Naive thymus-derived CD4-positive, alpha-beta T cell (primary cell): ENCODE measurements at regions of chr1 and their contacts with region 1.

Region 1: DNA sequence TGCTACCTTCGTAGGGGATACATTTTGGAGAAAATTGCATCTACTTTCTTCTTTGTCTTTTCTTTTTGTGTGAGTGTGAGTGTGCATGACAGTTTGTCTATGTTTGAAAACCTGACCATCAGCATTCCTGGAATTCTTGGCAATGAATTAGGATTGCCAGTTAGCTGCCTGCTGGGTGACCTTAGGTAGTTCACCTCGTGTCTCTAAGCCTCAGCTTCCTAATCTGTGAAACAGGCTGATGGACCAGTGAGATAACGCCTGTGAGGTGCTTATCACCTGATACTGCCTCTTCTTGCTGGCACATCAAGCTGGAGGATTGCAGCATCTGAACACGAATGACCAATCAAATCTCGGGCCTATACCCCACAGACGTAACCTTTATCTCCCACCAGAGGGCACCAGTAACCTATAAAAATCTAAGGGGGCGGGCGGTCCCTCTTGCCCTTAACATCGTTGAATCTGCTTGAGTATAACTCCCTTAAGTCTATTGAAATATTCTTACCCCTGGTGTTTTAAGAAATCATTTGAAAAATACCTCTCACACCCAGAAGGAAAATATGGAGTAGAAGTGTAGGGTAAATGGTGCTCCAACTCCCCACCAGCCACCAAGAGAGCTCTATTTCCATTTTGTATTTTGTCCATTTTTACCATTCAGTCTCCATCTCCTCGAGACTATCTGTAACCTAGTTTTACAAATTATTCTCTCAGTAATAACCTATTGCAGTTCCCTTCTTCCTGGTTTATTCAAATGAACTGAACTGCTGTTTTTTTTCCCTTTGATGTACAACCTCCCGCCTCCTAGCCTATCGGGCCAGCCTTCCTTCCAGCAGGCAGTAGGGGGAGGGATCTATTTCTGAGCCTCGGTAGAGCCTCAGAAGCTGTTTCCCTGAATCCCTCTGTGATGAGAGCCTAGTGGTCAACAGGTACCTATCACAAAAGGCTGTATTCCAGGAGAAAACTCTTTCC is 49.7 kb downstream of the MDM4 start:
- DNase-seq: peak in 8 of 9 donors; percentile 47 to 80 (median 68)
- ATAC-seq: peak; percentile 92
- H3K4me3 ChIP-seq: no peak overlapping the region
- H3K4me3 Mint-ChIP-seq: peak overlapping the region in 5 of 10 donors; percentile 3 to 51 (median 15)
- H3K27ac ChIP-seq: no peak overlapping the region
- H3K27ac Mint-ChIP-seq: peak overlapping the region; percentile 58 to 84 (median 74)
- H3K4me1 ChIP-seq: peaks cover 14 to 37% of the 10 kb centered on the region in 2 donors
- H3K4me1 Mint-ChIP-seq: peaks cover 22 to 62% (median 55%) of the 10 kb centered on the region in 7 donors
- H3K27me3 ChIP-seq: no peaks in the 10 kb centered on the region
- H3K27me3 Mint-ChIP-seq: no peaks in the 10 kb centered on the region

Region 2: DNA sequence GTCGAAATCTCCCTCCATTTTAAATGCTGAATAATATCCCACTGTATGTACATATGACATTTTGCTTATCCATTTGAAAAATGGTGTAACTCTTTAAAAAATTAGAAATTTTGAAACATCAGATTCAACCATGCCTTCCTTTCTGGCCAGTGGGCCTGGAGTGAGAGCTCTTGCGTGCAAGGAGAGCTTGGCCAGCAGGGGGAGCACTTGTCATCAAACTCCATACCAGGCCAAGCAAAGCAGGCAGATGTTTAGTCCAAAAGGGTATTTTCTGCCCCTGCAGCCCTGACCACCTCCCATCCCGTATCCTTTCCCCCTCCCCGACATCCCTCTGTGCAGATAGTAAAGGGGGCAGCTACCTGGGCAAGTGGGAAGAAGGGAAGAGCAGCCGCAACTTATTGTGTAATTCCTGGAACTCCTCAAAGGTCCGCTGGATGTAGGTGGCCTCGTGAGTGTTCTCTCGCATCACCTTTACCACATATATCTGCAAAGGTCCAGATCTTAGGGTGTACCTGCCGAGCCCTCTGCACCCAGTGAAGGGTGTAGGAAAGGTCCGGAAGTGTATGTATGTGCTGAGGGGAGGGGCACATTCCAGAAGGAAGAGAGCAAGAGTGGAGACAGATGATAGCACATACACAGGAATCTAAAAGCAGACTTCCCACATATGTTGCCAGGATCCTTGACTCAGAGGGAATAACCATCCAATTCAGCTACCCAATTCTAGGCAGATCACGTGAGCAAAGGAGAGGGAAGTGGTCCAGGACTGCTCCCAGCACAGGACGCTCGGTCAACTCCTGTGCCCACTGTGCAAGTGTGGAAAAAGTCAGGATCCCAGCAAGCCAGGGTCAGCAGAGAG is 134.4 kb before region 1 on chr1:
- CTCF ChIA-PET with region 1: no interaction called
- POLR2A ChIA-PET with region 1: no interaction called
- intact Hi-C with region 1: loop called in 1 of 2 experiments (anchors 5 kb)
- DNase-seq: peak; percentile 52 to 75 (median 69)
- ATAC-seq: peak; percentile 88
- H3K4me3 ChIP-seq: no peak overlapping the region
- H3K4me3 Mint-ChIP-seq: no peak overlapping the region
- H3K27ac ChIP-seq: no peak overlapping the region
- H3K27ac Mint-ChIP-seq: peak overlapping the region in 5 of 9 donors; percentile 6 to 69 (median 42)
- H3K4me1 ChIP-seq: no peaks in the 10 kb centered on the region
- H3K4me1 Mint-ChIP-seq: peaks cover 0 to 13% (median 4%) of the 10 kb centered on the region in 7 donors
- H3K27me3 ChIP-seq: no peaks in the 10 kb centered on the region
- H3K27me3 Mint-ChIP-seq: no peaks in the 10 kb centered on the region

Region 3: GRCh38 chr1:204544321-204544720 is 21.6 kb before region 1 on chr1:
- CTCF ChIA-PET with region 1: interaction called, 4 read pairs
- POLR2A ChIA-PET with region 1: interaction called, 6 read pairs
- intact Hi-C with region 1: loop called (anchors 1 to 2 kb)
- DNase-seq: peak in 7 of 9 donors; percentile 47 to 76 (median 67)
- ATAC-seq: peak; percentile 96
- H3K4me3 ChIP-seq: no peak overlapping the region
- H3K4me3 Mint-ChIP-seq: peak overlapping the region; percentile 0 to 77 (median 60)
- H3K27ac ChIP-seq: peak overlapping the region; percentile 63
- H3K27ac Mint-ChIP-seq: peak overlapping the region; percentile 51 to 94 (median 81)
- H3K4me1 ChIP-seq: peaks cover 30 to 39% of the 10 kb centered on the region in 2 donors
- H3K4me1 Mint-ChIP-seq: peaks cover 29 to 71% (median 65%) of the 10 kb centered on the region in 7 donors
- H3K27me3 ChIP-seq: no peaks in the 10 kb centered on the region
- H3K27me3 Mint-ChIP-seq: no peaks in the 10 kb centered on the region

Region 4: DNA sequence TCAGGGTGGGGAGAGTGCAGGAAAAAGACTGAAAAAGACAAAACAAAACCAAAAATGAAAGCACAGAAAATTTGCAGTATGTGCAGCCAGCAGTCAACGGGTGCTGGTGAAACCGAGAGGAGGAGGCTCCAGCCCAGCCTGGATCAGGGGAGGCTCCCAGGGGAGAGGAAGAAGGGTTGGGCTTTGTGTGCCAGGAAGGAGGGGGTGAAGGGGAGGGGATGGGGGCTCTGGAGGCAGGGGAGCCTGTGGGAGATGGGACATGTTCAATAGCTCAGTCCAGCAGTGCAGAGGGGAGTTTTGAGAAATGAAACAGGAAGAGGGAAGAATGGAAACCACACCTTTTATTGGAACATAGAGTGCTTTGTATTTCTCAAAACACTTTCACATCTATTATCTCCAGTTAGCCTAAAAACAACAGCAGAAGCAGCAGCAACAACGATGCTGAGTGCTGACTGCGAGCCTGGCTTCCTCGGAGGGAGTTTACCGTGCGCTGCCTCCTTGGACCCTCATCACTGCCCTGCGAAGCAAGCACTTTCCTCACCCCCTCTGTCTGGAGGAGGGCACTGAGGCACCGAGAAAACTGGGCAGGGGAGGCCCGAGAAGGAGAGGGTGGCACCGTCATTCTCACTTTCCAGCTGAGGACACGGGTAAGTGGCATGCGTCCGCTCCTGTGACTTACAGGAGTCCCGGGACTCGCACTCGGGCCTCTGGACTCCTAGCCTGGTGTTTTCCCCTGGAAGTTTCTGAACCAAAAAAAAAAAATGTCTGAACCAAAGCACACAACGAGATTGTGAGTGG is 13.2 kb after region 1 on chr1:
- CTCF ChIA-PET with region 1: interaction called, 4 read pairs
- POLR2A ChIA-PET with region 1: interaction called, 3 read pairs
- intact Hi-C with region 1: loop called in 1 of 2 experiments (anchors 1 kb)
- DNase-seq: peak in 5 of 9 donors; percentile 21 to 44 (median 27)
- ATAC-seq: peak; percentile 60
- H3K4me3 ChIP-seq: peak overlapping the region; percentile 47
- H3K4me3 Mint-ChIP-seq: peak overlapping the region; percentile 77 to 88 (median 82)
- H3K27ac ChIP-seq: peak overlapping the region; percentile 67
- H3K27ac Mint-ChIP-seq: peak overlapping the region; percentile 83 to 97 (median 89)
- H3K4me1 ChIP-seq: peaks cover 9 to 26% of the 10 kb centered on the region in 2 donors
- H3K4me1 Mint-ChIP-seq: peaks cover 14 to 43% (median 35%) of the 10 kb centered on the region in 7 donors
- H3K27me3 ChIP-seq: no peaks in the 10 kb centered on the region
- H3K27me3 Mint-ChIP-seq: no peaks in the 10 kb centered on the region

Region 5: GRCh38 chr1:204623894-204624361 is 58.0 kb after region 1 on chr1:
- CTCF ChIA-PET with region 1: interaction called, 3 read pairs
- POLR2A ChIA-PET with region 1: no interaction called
- intact Hi-C with region 1: loop called (anchors 1 to 5 kb)
- DNase-seq: peak in 5 of 9 donors; percentile 12 to 21 (median 18)
- ATAC-seq: peak; percentile 63
- H3K4me3 ChIP-seq: no peak overlapping the region
- H3K4me3 Mint-ChIP-seq: no peak overlapping the region
- H3K27ac ChIP-seq: no peak overlapping the region
- H3K27ac Mint-ChIP-seq: no peak overlapping the region
- H3K4me1 ChIP-seq: no peaks in the 10 kb centered on the region
- H3K4me1 Mint-ChIP-seq: no peaks in the 10 kb centered on the region
- H3K27me3 ChIP-seq: no peaks in the 10 kb centered on the region
- H3K27me3 Mint-ChIP-seq: no peaks in the 10 kb centered on the region

Region 6: GRCh38 chr1:204763706-204764427 is 198.0 kb after region 1 on chr1:
- CTCF ChIA-PET with region 1: interaction called, 38 read pairs
- POLR2A ChIA-PET with region 1: interaction called, 3 read pairs
- intact Hi-C with region 1: loop called (anchors 1 kb)
- DNase-seq: peak; percentile 44 to 80 (median 66)
- ATAC-seq: peak; percentile 96
- H3K4me3 ChIP-seq: peak overlapping the region; percentile 27
- H3K4me3 Mint-ChIP-seq: peak overlapping the region; percentile 46 to 74 (median 60)
- H3K27ac ChIP-seq: no peak overlapping the region
- H3K27ac Mint-ChIP-seq: no peak overlapping the region
- H3K4me1 ChIP-seq: peaks cover 4 to 9% of the 10 kb centered on the region in 2 donors
- H3K4me1 Mint-ChIP-seq: peaks cover 6 to 16% (median 7%) of the 10 kb centered on the region in 7 donors
- H3K27me3 ChIP-seq: no peaks in the 10 kb centered on the region
- H3K27me3 Mint-ChIP-seq: peaks cover 3 to 41% (median 11%) of the 10 kb centered on the region in 5 donors

Region 7: DNA sequence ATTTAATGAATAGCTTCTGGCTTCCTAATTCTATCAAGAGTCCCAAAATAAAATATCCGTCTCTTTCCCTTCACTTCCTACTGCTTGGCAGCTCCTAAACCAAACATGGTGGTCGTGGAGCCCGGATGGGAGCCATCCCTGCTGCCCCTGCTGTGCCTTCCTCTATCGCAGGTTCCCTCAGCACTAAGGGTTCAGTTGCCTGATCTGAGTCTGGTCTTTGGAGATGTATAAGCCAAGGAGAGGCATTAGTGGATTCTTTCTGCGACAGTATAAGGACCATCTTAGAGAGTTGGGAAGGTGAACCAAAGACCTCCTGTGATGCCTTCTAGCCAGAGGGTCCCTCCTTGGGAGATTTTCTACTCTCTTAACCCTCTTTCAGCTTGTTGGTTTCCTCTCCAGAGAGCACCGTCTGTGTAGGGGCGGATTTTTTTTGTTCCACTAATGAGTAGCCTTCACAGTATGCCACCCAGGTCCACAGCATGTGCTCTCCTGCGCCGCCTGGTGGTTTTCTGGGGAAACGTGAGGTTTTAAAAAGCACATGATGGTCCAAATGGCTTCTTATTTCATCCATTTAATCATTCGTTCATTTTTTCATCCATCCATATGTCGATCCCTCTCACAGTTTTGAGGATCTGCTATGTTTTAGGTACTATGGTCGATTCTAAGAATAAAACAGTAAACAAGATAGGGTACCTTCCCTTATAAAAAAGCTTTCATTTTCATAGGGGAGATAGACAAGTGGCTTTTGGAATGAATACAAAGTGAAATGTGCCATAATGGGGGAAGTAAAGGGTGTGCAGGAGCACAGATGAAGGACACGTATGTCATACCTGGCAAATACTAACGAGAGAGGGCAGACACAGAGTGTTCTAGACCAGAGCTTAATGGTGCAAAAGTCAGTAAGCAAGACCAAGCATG is 375.8 kb after region 1 on chr1:
- CTCF ChIA-PET with region 1: no interaction called
- POLR2A ChIA-PET with region 1: no interaction called
- intact Hi-C with region 1: loop called in 1 of 2 experiments (anchors 5 kb)
- DNase-seq: peak in 5 of 9 donors; percentile 4 to 51 (median 17)
- ATAC-seq: peak; percentile 47
- H3K4me3 ChIP-seq: no peak overlapping the region
- H3K4me3 Mint-ChIP-seq: no peak overlapping the region
- H3K27ac ChIP-seq: no peak overlapping the region
- H3K27ac Mint-ChIP-seq: no peak overlapping the region
- H3K4me1 ChIP-seq: no peaks in the 10 kb centered on the region
- H3K4me1 Mint-ChIP-seq: no peaks in the 10 kb centered on the region
- H3K27me3 ChIP-seq: peaks cover 0 to 3% of the 10 kb centered on the region in 2 donors
- H3K27me3 Mint-ChIP-seq: peaks cover 3 to 29% (median 5%) of the 10 kb centered on the region in 5 donors